ENCODE measurements at regions of chr11 and their contacts with region 1.

Region 1: DNA sequence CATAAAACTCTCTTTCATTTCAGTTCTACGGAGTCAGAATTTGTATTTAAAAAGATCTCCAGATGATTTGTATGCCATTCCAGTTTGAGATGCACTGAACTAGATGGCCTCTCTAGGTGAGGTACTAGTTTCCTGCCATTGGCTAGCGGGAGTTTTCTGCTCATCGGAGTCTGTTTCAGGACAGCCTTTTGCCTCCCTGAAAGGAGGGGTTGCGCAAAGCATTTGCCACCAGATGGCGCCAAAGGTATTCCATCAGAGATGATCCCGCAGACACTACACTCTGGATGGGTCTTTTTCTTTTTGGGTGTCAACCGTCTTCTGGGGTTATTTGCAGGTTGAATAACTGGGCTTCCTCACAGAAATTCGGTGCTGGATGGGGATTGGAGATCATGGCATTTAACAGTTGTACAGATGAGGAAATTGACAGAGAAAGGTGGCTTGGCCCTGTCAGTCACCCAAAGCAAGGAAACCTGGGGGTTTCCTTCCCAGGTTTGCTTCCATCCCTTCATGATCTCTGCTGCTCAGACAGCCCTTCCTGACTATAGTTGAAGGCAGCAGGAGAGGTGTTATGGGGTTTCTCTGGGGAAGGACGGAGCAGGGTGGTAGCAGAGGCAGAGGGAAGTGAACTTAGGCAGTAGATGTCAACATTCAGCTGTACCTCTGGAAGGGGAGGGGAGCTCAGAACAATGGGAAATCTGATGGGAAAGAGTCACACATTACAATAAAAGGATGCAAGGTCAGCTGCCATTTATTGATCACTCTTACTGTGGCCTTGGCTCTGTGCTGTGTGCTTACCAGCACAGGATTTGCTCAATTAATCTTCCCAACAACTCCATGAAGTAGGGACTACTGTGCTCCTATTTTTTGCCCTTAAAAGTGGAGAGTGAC is 81.6 kb downstream of the CCDC81 start:
- DNase-seq: peak; percentile 75 to 93
- H3K4me3 ChIP-seq: no peak overlapping the region
- H3K27ac ChIP-seq: no peak overlapping the region
- H3K4me1 ChIP-seq: peaks cover 0 to 4% (median 0%) of the 10 kb centered on the region in 4 experiments; a peak in 1 of 7 replicates
- H3K27me3 ChIP-seq: no peaks in the 10 kb centered on the region
- CTCF ChIP-seq: peak; percentile 68 to 93 (median 88)
- EP300 ChIP-seq: peak in 1 of 2 experiments; percentile 15; a peak in 1 of 3 replicates
- POLR2A ChIP-seq: no peak
- RAD21 ChIP-seq: peak; percentile 98

Region 2: GRCh38 chr11:86274503-86274902 is 181.8 kb before region 1 on chr11:
- CTCF ChIA-PET with region 1: no interaction called
- POLR2A ChIA-PET with region 1: no interaction called
- DNase-seq: peak in 1 of 2 experiments; percentile 58
- H3K4me3 ChIP-seq: no peak overlapping the region
- H3K27ac ChIP-seq: no peak overlapping the region
- H3K4me1 ChIP-seq: no peaks in the 10 kb centered on the region
- H3K27me3 ChIP-seq: no peaks in the 10 kb centered on the region
- CTCF ChIP-seq: peak; percentile 54 to 75 (median 58)
- EP300 ChIP-seq: no peak
- POLR2A ChIP-seq: no peak
- RAD21 ChIP-seq: peak; percentile 31 to 58; a peak in 3 of 4 replicates

Region 3: GRCh38 chr11:86469491-86470393 is 13.4 kb after region 1 on chr11:
- CTCF ChIA-PET with region 1: interaction called, 18 read pairs
- POLR2A ChIA-PET with region 1: no interaction called
- DNase-seq: no peak
- H3K4me3 ChIP-seq: no peak overlapping the region
- H3K27ac ChIP-seq: no peak overlapping the region
- H3K4me1 ChIP-seq: no peaks in the 10 kb centered on the region
- H3K27me3 ChIP-seq: no peaks in the 10 kb centered on the region
- CTCF ChIP-seq: no peak
- EP300 ChIP-seq: no peak
- POLR2A ChIP-seq: no peak
- RAD21 ChIP-seq: no peak

Region 4: DNA sequence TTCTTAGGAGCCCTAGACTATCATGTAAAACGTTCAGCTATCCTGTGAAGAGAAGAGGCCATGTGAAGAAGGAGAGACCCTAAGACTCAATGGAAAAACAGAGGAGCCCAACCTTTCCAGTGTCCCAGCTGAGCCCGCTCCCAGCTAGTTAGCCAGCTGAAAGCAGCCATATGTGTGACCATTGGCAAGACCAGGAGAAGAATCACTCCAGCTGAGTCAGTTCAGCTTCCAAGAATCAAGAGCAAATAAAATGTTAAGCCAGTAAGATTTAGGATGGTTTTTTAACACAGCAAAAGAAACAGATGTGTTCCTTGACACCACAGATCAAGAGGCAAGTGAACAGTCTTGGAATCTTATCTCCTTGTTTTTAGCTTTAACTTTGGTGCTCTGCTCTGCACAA is 26.4 kb after region 1 on chr11:
- CTCF ChIA-PET with region 1: interaction called, 36 read pairs
- POLR2A ChIA-PET with region 1: no interaction called
- DNase-seq: no peak
- H3K4me3 ChIP-seq: no peak overlapping the region
- H3K27ac ChIP-seq: no peak overlapping the region
- H3K4me1 ChIP-seq: peaks cover 0 to 4% (median under 1%) of the 10 kb centered on the region in 4 experiments; a peak in 2 of 7 replicates
- H3K27me3 ChIP-seq: no peaks in the 10 kb centered on the region
- CTCF ChIP-seq: no peak
- EP300 ChIP-seq: no peak
- POLR2A ChIP-seq: no peak
- RAD21 ChIP-seq: no peak

Region 5: GRCh38 chr11:86497181-86497701 is 40.9 kb after region 1 on chr11:
- CTCF ChIA-PET with region 1: no interaction called
- POLR2A ChIA-PET with region 1: no interaction called
- DNase-seq: no peak
- H3K4me3 ChIP-seq: no peak overlapping the region
- H3K27ac ChIP-seq: no peak overlapping the region
- H3K4me1 ChIP-seq: peaks cover 3 to 11% (median 5%) of the 10 kb centered on the region in 4 experiments; a peak in 4 of 7 replicates
- H3K27me3 ChIP-seq: no peaks in the 10 kb centered on the region
- CTCF ChIP-seq: no peak
- EP300 ChIP-seq: no peak
- POLR2A ChIP-seq: no peak
- RAD21 ChIP-seq: no peak

Region 6: DNA sequence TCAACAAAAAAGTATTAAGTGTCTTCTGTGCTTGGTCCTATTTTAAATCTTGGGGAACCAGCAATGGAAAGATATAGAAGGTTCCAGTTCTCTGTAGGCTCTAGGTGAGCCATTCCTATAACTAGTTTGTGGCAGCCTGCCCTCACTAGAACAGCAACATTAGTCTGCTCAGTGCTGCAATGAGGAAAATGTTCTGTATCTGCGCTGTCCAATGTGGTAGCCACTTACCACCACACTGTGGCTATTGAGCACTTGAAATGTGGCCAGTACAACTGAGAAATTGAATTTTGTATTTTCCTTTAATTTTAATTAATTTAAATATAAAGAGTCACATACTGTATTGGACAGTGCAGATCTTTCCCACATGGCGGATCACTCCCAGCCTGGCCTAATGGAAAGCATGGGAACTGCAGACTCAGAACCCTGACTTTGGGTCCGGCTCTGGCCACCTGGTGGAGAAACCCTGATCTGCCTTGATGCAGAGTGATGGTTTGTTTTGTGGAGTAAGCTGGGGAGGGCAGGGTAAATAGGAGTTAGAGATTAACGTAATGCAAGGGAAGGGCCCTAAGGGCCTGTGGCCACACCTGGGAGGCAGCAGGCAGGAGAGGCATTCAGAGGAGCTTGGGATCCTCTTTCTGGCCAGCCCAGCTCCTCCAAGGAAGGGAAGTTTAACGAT is 115.1 kb after region 1 on chr11:
- CTCF ChIA-PET with region 1: interaction called, 30 read pairs
- POLR2A ChIA-PET with region 1: no interaction called
- DNase-seq: peak; percentile 76 to 87
- H3K4me3 ChIP-seq: no peak overlapping the region
- H3K27ac ChIP-seq: no peak overlapping the region
- H3K4me1 ChIP-seq: no peaks in the 10 kb centered on the region; a peak in 1 of 7 replicates
- H3K27me3 ChIP-seq: no peaks in the 10 kb centered on the region
- CTCF ChIP-seq: peak; percentile 82 to 99 (median 91)
- EP300 ChIP-seq: no peak
- POLR2A ChIP-seq: no peak
- RAD21 ChIP-seq: peak; percentile 67 to 81

Region 7: GRCh38 chr11:86749376-86749775 is 293.1 kb after region 1 on chr11:
- CTCF ChIA-PET with region 1: interaction called, 14 read pairs
- POLR2A ChIA-PET with region 1: no interaction called
- DNase-seq: no peak
- H3K4me3 ChIP-seq: no peak overlapping the region
- H3K27ac ChIP-seq: no peak overlapping the region
- H3K4me1 ChIP-seq: no peaks in the 10 kb centered on the region
- H3K27me3 ChIP-seq: no peaks in the 10 kb centered on the region
- CTCF ChIP-seq: peak; percentile 48 to 91 (median 64)
- EP300 ChIP-seq: no peak
- POLR2A ChIP-seq: no peak
- RAD21 ChIP-seq: peak; percentile 63 to 70

Region 8: GRCh38 chr11:86802601-86803051 is 346.3 kb after region 1 on chr11:
- CTCF ChIA-PET with region 1: interaction called, 11 read pairs
- POLR2A ChIA-PET with region 1: interaction called, 3 read pairs
- DNase-seq: no peak
- H3K4me3 ChIP-seq: no peak overlapping the region
- H3K27ac ChIP-seq: no peak overlapping the region
- H3K4me1 ChIP-seq: peaks cover 0 to 10% (median 7%) of the 10 kb centered on the region in 4 experiments; a peak in 5 of 7 replicates
- H3K27me3 ChIP-seq: peaks cover 0 to 16% (median 13%) of the 10 kb centered on the region in 4 experiments; a peak in 4 of 7 replicates
- CTCF ChIP-seq: peak in 2 of 3 experiments; percentile 33 to 63; a peak in 3 of 4 replicates
- EP300 ChIP-seq: no peak
- POLR2A ChIP-seq: no peak
- RAD21 ChIP-seq: peak; percentile 20 to 45; a peak in 2 of 4 replicates

Region 9: DNA sequence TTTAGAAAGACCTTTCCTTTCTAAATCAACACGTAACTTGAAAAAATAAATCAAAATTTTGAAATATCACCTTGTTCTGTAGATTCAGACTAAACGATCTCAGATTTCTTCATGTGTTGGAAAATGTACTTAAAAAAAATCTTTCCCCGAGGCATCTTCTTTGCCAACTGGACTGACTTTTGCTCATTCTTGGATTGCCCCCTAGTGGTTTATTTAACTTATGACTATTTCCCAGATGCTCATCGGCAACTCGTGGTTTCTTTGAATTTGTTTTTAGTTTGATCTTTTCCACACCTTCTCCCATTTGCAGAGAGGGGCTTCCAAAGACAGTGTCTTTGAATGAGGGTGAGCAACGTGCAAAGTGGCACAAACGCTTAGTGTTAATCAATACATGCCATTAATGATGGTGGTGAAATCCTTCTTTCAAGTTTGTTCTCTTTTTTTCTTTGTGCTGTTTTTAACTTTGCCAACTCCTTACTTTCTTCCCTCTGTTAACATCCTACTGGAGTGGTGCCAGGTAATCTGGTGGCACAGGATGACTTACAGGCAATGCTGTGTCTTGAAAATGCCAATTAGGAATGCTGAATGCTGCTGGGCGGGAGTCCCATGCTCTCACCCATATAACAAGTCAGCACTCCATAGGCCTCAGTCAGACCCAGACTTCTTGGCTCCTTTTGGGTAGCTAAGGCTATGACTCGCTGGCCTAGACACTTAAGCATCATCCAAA is 362.3 kb after region 1 on chr11:
- CTCF ChIA-PET with region 1: interaction called, 18 read pairs
- POLR2A ChIA-PET with region 1: no interaction called
- DNase-seq: no peak
- H3K4me3 ChIP-seq: no peak overlapping the region
- H3K27ac ChIP-seq: no peak overlapping the region
- H3K4me1 ChIP-seq: no peaks in the 10 kb centered on the region
- H3K27me3 ChIP-seq: no peaks in the 10 kb centered on the region
- CTCF ChIP-seq: peak in 2 of 3 experiments; percentile 64 to 79; a peak in 3 of 4 replicates
- EP300 ChIP-seq: no peak
- POLR2A ChIP-seq: no peak
- RAD21 ChIP-seq: peak; percentile 90

Measured in H1 (cell line).